ENCODE measurements at regions of chr6 and their contacts with region 1.

Region 1: DNA sequence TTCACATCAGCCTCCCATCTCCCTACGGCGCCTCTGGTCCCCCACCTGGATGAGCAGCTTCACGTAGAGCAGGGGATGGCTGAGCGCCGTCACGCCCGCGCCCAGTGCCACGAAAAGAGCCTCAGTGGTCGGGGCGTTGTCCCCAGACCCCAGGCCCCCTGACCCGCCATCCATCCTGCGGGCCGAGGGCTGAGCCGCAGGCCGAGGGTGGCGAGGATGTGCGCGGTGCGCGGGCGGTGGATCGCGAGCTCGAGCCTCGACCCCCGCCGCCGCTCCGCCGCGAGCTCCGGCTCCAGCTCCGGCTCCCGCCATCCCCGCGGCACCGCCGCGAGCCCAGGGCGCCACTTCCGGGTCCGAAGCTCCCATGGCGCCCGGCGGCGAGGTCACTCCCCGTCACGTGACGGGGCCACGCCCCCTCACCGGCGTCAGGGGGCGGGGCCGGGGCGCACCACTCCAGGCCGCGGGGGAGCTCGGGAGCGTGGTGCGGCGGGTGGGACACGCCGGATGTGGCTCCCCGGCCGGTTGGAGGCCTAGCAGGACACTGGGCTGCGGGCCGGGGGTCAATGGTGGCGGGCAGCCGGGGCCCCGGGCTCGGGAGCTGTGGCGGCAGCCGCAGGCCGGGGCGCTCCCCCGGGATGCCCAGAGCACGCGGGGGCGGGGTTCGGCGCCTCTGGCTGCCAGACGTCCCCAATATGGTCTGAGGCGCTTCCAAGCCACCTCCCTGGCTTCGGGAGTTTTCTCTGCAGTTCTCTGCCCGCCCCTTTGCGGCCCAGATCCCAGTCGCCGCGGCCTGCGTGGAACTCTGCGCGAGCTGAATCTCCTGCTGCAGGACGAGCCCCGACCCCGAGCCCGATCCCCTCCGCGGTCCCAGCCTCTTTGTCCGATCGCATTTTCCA is at the start of gene MTCH1:
- DNase-seq: peak; percentile 95

Region 2: GRCh38 chr6:35146453-35146852 is 1839.6 kb before region 1 on chr6:
- CTCF ChIA-PET with region 1: no interaction called
- POLR2A ChIA-PET with region 1: no interaction called
- DNase-seq: peak; percentile 33

Region 3: DNA sequence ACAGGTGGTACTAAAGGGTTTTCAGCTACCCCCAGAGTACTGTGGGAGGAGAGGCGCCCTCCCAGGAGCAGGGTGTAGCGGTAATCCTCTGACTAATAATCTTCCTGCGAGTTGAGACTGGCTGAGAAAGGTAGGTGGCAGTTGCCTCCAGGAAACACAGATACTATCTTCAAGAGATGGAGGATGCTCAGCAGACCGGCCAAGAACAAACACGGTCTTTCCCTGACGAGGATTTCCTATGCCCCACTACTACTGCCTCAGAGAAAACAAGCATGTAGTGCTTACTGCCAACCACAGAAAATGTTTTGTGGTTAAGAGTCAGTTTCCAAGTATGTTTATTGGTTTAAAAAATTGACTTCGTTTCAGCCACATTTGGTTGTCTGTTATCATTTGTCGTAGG is 73.5 kb before region 1 on chr6:
- CTCF ChIA-PET with region 1: no interaction called
- POLR2A ChIA-PET with region 1: no interaction called
- DNase-seq: no peak

Region 4: GRCh38 chr6:36997811-36998722 is 12.0 kb after region 1 on chr6:
- CTCF ChIA-PET with region 1: no interaction called
- POLR2A ChIA-PET with region 1: interaction called, 18 read pairs
- DNase-seq: no peak